IMR-90 (cell line): ENCODE measurements at regions of chr4 and their contacts with region 1.

Region 1: DNA sequence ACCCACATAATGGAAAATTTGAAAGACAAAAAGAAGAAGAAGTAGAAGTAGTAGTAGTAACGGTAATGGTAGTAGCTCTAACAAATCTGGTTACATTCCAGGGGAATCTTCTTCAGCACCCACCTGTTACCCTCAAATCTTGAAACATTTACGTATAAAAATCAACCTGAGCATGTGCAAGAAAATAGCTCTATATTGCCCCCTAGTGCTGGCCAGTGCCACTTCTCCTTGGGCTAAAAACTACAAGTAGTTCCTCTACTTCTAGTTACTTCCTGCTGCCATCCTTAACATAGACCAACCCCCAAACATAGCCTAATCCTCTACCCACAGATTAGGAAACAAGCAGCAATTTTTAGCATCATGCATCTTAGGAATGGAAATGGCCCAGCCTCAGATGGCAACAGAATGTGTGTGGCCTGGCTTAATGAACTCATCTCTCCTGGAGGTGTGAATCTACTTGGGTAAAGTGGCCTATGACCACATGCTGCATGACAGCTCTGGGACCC is 3.1 kb downstream of the PDGFC start:
- DNase-seq: peak; percentile 85
- ATAC-seq: peak; percentile 48
- H3K4me3 ChIP-seq: peak overlapping the region; percentile 61
- H3K27ac ChIP-seq: peak overlapping the region; percentile 64
- H3K4me1 ChIP-seq: peaks cover 7% of the 10 kb centered on the region
- H3K27me3 ChIP-seq: no peaks in the 10 kb centered on the region
- CTCF ChIP-seq: peak; percentile 88
- POLR2A ChIP-seq: no peak
- RAD21 ChIP-seq: peak; percentile 90

Region 2: GRCh38 chr4:156169011-156169410 is 799.5 kb before region 1 on chr4:
- CTCF ChIA-PET with region 1: no interaction called
- POLR2A ChIA-PET with region 1: no interaction called
- dilution Hi-C with region 1: no loop called
- in situ Hi-C with region 1: loop called (anchors 10 kb)
- intact Hi-C with region 1: loop called (anchors 2 kb)
- DNase-seq: peak; percentile 95
- ATAC-seq: peak; percentile 97
- H3K4me3 ChIP-seq: no peak overlapping the region
- H3K27ac ChIP-seq: no peak overlapping the region
- H3K4me1 ChIP-seq: peaks cover 5% of the 10 kb centered on the region
- H3K27me3 ChIP-seq: no peaks in the 10 kb centered on the region
- CTCF ChIP-seq: peak; percentile 75
- POLR2A ChIP-seq: no peak
- RAD21 ChIP-seq: peak; percentile 84

Region 3: DNA sequence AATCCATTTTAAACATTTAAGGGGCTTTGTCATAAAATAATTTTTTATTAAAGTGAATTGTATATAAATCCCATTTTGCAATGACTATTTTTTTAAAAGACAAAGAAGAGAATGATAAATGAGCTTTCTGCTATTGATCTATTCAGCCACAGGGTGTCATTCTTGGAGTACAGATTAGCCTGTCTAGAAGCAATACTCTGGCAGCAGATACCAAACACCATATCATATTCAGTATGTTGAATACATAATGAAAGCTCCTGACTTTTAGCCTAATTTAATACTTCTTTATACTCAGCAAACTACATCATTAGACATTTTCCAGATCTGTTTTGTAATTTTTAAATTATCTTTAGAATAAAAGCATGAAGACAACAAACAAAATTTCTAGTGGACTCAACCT is 493.2 kb before region 1 on chr4:
- CTCF ChIA-PET with region 1: interaction called, 26 read pairs
- POLR2A ChIA-PET with region 1: interaction called, 5 read pairs
- dilution Hi-C with region 1: no loop called
- in situ Hi-C with region 1: loop called (anchors 5 kb)
- intact Hi-C with region 1: loop called (anchors 1 kb)
- DNase-seq: peak; percentile 76
- ATAC-seq: peak; percentile 32; the same call in 1 of the 2 replicates
- H3K4me3 ChIP-seq: no peak overlapping the region
- H3K27ac ChIP-seq: no peak overlapping the region
- H3K4me1 ChIP-seq: peaks cover 5% of the 10 kb centered on the region
- H3K27me3 ChIP-seq: no peaks in the 10 kb centered on the region
- CTCF ChIP-seq: peak; percentile 70
- POLR2A ChIP-seq: no peak
- RAD21 ChIP-seq: peak; percentile 90

Region 4: GRCh38 chr4:156638925-156639605 is 329.5 kb before region 1 on chr4:
- CTCF ChIA-PET with region 1: no interaction called
- POLR2A ChIA-PET with region 1: no interaction called
- dilution Hi-C with region 1: no loop called
- in situ Hi-C with region 1: no loop called
- intact Hi-C with region 1: loop called (anchors 5 kb)
- DNase-seq: peak; percentile 69
- ATAC-seq: peak; percentile 75
- H3K4me3 ChIP-seq: no peak overlapping the region
- H3K27ac ChIP-seq: no peak overlapping the region
- H3K4me1 ChIP-seq: peaks cover 5% of the 10 kb centered on the region; the same call in 1 of the 2 replicates
- H3K27me3 ChIP-seq: no peaks in the 10 kb centered on the region
- CTCF ChIP-seq: no peak
- POLR2A ChIP-seq: no peak
- RAD21 ChIP-seq: no peak

Region 5: GRCh38 chr4:156779774-156780173 is 188.8 kb before region 1 on chr4:
- CTCF ChIA-PET with region 1: interaction called, 3 read pairs
- POLR2A ChIA-PET with region 1: no interaction called
- dilution Hi-C with region 1: no loop called
- in situ Hi-C with region 1: loop called (anchors 10 kb)
- intact Hi-C with region 1: loop called (anchors 2 kb)
- DNase-seq: peak; percentile 95
- ATAC-seq: peak; percentile 72
- H3K4me3 ChIP-seq: no peak overlapping the region
- H3K27ac ChIP-seq: peak overlapping the region; percentile 30; the same call in 1 of the 2 replicates
- H3K4me1 ChIP-seq: peaks cover 14% of the 10 kb centered on the region
- H3K27me3 ChIP-seq: no peaks in the 10 kb centered on the region
- CTCF ChIP-seq: no peak
- POLR2A ChIP-seq: no peak
- RAD21 ChIP-seq: no peak

Region 6: GRCh38 chr4:156931267-156931666 is 37.3 kb before region 1 on chr4:
- CTCF ChIA-PET with region 1: no interaction called
- POLR2A ChIA-PET with region 1: no interaction called
- dilution Hi-C with region 1: no loop called
- in situ Hi-C with region 1: no loop called
- intact Hi-C with region 1: no loop called
- DNase-seq: peak; percentile 86
- ATAC-seq: peak; percentile 27; the same call in 1 of the 2 replicates
- H3K4me3 ChIP-seq: no peak overlapping the region
- H3K27ac ChIP-seq: no peak overlapping the region; the same call in 1 of the 2 replicates
- H3K4me1 ChIP-seq: peaks cover 13% of the 10 kb centered on the region
- H3K27me3 ChIP-seq: no peaks in the 10 kb centered on the region
- CTCF ChIP-seq: no peak
- POLR2A ChIP-seq: no peak
- RAD21 ChIP-seq: no peak

Region 7: DNA sequence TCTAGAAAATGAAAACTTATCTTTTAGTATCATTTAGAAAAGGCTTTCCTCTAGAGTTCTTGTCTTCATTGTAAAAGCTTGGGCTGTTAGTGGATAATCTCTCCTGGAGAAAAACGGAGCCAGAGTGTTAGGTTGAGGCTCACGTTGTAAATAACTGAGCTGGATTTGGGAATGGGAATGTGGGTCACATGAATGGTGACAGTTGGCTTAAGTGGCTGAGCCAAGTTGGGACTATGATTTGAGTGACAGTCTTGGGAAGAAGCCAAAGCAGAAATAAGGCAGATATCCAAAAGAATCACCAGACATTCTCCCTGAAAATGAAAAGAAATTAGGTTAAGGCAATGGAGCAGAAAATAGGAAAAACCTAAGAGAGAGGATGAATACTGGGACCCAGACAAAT is 36.7 kb after region 1 on chr4:
- CTCF ChIA-PET with region 1: no interaction called
- POLR2A ChIA-PET with region 1: no interaction called
- dilution Hi-C with region 1: no loop called
- in situ Hi-C with region 1: no loop called
- intact Hi-C with region 1: no loop called
- DNase-seq: no peak
- ATAC-seq: no peak
- H3K4me3 ChIP-seq: no peak overlapping the region
- H3K27ac ChIP-seq: no peak overlapping the region
- H3K4me1 ChIP-seq: no peaks in the 10 kb centered on the region
- H3K27me3 ChIP-seq: no peaks in the 10 kb centered on the region
- CTCF ChIP-seq: no peak
- POLR2A ChIP-seq: no peak
- RAD21 ChIP-seq: no peak

Region 8: GRCh38 chr4:157172011-157172410 is 203.5 kb after region 1 on chr4:
- CTCF ChIA-PET with region 1: no interaction called
- POLR2A ChIA-PET with region 1: no interaction called
- dilution Hi-C with region 1: no loop called
- in situ Hi-C with region 1: no loop called
- intact Hi-C with region 1: loop called (anchors 5 kb)
- DNase-seq: peak; percentile 31
- ATAC-seq: no peak
- H3K4me3 ChIP-seq: no peak overlapping the region
- H3K27ac ChIP-seq: no peak overlapping the region
- H3K4me1 ChIP-seq: no peaks in the 10 kb centered on the region
- H3K27me3 ChIP-seq: no peaks in the 10 kb centered on the region
- CTCF ChIP-seq: peak; percentile 47
- POLR2A ChIP-seq: no peak
- RAD21 ChIP-seq: peak; percentile 49

Region 9: DNA sequence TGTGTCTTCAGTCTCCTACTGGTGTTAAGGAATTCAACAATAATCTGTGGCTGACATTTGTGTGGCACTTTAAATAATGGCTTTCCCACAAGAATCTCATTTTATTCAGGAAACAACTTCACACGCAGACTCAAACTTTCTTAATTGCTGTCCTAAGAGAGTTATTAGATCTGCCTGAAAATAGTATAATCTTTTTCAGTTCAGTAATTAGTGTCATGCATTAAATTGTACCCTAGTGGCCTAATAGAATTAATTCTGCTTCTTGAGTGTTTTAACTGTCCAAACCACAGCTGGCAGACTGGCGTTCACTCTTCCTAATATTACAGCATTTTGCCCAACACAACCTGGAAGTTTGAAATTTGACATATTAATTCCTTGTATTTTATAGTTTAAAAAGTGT is 359.1 kb after region 1 on chr4:
- CTCF ChIA-PET with region 1: no interaction called
- POLR2A ChIA-PET with region 1: no interaction called
- dilution Hi-C with region 1: no loop called
- in situ Hi-C with region 1: no loop called
- intact Hi-C with region 1: no loop called
- DNase-seq: no peak
- ATAC-seq: no peak
- H3K4me3 ChIP-seq: no peak overlapping the region
- H3K27ac ChIP-seq: no peak overlapping the region
- H3K4me1 ChIP-seq: no peaks in the 10 kb centered on the region
- H3K27me3 ChIP-seq: no peaks in the 10 kb centered on the region
- CTCF ChIP-seq: no peak
- POLR2A ChIP-seq: no peak
- RAD21 ChIP-seq: no peak